ENCODE measurements at regions of chr1 and their contacts with region 1.

Region 1: DNA sequence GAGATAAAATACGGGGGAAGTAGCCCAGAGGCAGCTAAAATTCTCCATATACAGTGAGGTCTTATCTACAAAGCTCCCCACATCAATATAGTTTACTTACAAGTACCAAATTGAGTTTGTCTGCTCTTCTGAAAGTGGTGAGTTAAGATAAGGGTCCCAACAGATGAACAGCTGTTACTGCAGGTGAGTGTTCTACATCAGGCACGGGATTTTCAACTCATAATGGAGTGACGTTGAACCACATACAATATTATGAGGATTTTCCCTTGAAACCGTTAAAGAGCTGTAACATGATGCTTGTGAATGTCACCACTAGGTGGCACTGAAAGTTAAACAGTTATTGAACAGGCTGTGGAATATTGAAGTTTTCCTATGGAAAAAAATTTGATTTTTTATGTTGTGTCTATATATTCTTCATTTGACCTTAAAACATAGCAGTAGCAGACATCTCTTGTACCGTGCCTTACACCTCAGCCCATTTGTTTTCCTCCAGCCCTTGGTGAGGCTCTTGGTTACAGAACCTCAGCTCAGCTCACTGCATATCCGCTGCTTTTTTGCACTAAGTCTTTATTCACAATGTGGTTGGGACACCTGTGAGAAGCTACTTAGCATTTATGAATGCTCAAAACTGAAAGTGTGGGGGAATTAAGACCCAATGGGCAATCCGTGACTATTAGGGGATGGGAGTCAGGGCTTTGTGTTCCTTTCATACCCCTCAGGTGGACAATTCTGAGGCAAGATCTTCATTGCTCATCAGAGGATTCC is 23.2 kb downstream of the CD1D start:
- DNase-seq: no peak
- H3K4me3 ChIP-seq: no peak overlapping the region
- H3K27ac ChIP-seq: no peak overlapping the region
- H3K4me1 ChIP-seq: no peaks in the 10 kb centered on the region
- H3K27me3 ChIP-seq: no peaks in the 10 kb centered on the region
- CTCF ChIP-seq: peak; percentile 53 to 79 (median 66)
- POLR2A ChIP-seq: no peak

Region 2: GRCh38 chr1:159071970-159072582 is 868.2 kb after region 1 on chr1:
- intact Hi-C with region 1: loop called (anchors 10 kb)
- DNase-seq: no peak
- H3K4me3 ChIP-seq: no peak overlapping the region
- H3K27ac ChIP-seq: no peak overlapping the region
- H3K4me1 ChIP-seq: no peaks in the 10 kb centered on the region
- H3K27me3 ChIP-seq: no peaks in the 10 kb centered on the region
- CTCF ChIP-seq: peak; percentile 56 to 72 (median 67)
- POLR2A ChIP-seq: no peak